Mammary epithelial cell (primary cell): ENCODE measurements at regions of chr18 and their contacts with region 1.

Region 1: DNA sequence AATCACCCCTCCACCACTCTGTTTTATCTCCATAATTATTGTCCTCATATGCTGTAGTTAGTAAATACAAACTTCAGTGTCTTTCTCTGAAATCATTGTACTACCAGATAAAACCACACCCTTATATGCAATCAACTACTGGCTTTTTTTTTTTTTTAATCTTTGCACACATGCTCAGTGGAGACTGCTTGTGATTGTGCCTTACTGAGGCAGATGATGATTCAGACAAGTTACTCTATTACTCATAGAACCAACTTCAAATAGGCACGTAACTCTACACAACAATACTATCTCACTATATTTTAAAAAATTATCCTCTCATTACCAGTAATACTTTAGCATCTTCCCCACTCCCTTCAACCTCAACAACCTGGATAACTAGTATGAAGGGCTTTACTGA is 1278.4 kb upstream of the PIK3C3 start:
- DNase-seq: peak; percentile 61
- H3K4me3 ChIP-seq: no peak overlapping the region
- H3K27ac ChIP-seq: no peak overlapping the region
- H3K4me1 ChIP-seq: peaks cover 9% of the 10 kb centered on the region
- H3K27me3 ChIP-seq: no peaks in the 10 kb centered on the region
- CTCF ChIP-seq: no peak

Region 2: DNA sequence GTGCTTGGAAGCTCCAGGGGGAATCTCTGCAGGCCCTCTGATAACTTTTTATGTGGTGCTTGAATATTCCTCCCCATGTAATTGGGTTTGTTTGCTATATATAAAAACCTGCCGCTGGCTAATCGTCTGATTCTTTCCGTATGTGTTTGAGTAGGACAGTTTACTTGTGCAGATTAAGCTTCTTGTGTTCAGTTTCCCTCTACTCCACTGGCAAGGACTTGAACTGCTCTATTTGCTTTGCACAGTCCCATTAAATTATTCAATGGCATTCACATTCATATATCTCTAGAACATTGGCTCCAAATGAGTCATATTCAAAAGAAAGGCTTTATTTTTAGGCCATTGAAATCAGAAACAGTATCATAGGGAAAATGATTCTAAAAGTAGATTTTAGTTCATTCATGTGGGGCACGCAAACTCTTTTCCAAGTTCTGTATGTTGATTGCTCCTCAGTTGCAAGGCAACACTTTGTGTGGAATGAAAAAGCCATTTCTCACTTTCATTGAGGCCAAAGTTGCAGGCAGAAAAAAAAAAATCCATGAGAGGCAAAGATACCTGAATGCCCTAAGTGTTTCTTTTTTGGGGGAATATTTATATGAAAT is 403.9 kb before region 1 on chr18:
- CTCF ChIA-PET with region 1: no interaction called
- dilution Hi-C with region 1: no loop called
- in situ Hi-C with region 1: no loop called
- intact Hi-C with region 1: no loop called
- DNase-seq: no peak
- H3K4me3 ChIP-seq: no peak overlapping the region
- H3K27ac ChIP-seq: no peak overlapping the region
- H3K4me1 ChIP-seq: no peaks in the 10 kb centered on the region
- H3K27me3 ChIP-seq: peaks cover 1% of the 10 kb centered on the region
- CTCF ChIP-seq: no peak

Region 3: GRCh38 chr18:40687399-40687798 is 10.7 kb after region 1 on chr18:
- CTCF ChIA-PET with region 1: no interaction called
- dilution Hi-C with region 1: no loop called
- in situ Hi-C with region 1: no loop called
- intact Hi-C with region 1: loop called (anchors 1 kb)
- DNase-seq: no peak
- H3K4me3 ChIP-seq: no peak overlapping the region
- H3K27ac ChIP-seq: no peak overlapping the region
- H3K4me1 ChIP-seq: no peaks in the 10 kb centered on the region
- H3K27me3 ChIP-seq: no peaks in the 10 kb centered on the region
- CTCF ChIP-seq: no peak

Region 4: GRCh38 chr18:40698129-40698528 is 21.5 kb after region 1 on chr18:
- CTCF ChIA-PET with region 1: no interaction called
- dilution Hi-C with region 1: no loop called
- in situ Hi-C with region 1: no loop called
- intact Hi-C with region 1: no loop called
- DNase-seq: no peak
- H3K4me3 ChIP-seq: no peak overlapping the region
- H3K27ac ChIP-seq: no peak overlapping the region
- H3K4me1 ChIP-seq: no peaks in the 10 kb centered on the region
- H3K27me3 ChIP-seq: no peaks in the 10 kb centered on the region
- CTCF ChIP-seq: no peak